ENCODE measurements at regions of chr4 and their contacts with region 1.

Region 1: DNA sequence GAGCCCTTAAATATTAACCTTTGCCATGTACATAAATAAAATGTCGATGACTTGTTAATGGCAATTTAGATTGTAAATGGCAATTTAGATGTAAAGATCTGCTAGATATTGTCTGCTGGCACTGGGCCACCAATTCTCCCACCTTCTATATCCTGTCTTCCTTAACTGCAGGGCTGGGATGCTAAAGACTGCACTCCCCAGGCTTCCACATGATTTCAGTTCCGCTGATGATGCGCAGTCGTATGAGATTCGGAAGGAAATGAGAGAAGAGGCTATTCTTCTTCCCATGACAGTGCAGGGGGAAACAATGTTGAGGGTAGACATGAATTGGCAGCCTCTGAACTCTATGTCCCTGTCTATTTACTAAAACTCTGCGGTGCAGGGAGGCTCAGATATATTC is 55.7 kb downstream of the PITX2 start:
- DNase-seq: no peak
- H3K4me3 ChIP-seq: no peak overlapping the region
- H3K27ac ChIP-seq: no peak overlapping the region
- H3K4me1 ChIP-seq: no peaks in the 10 kb centered on the region
- H3K27me3 ChIP-seq: no peaks in the 10 kb centered on the region
- CTCF ChIP-seq: no peak

Region 2: GRCh38 chr4:110610940-110611831 is 44.0 kb after region 1 on chr4:
- CTCF ChIA-PET with region 1: no interaction called
- POLR2A ChIA-PET with region 1: no interaction called
- intact Hi-C with region 1: loop called (anchors 1 kb)
- DNase-seq: no peak
- H3K4me3 ChIP-seq: no peak overlapping the region
- H3K27ac ChIP-seq: no peak overlapping the region
- H3K4me1 ChIP-seq: no peaks in the 10 kb centered on the region
- H3K27me3 ChIP-seq: no peaks in the 10 kb centered on the region
- CTCF ChIP-seq: no peak